T-cell (primary cell): ENCODE measurements at regions of chr13 and their contacts with region 1.

Region 1: DNA sequence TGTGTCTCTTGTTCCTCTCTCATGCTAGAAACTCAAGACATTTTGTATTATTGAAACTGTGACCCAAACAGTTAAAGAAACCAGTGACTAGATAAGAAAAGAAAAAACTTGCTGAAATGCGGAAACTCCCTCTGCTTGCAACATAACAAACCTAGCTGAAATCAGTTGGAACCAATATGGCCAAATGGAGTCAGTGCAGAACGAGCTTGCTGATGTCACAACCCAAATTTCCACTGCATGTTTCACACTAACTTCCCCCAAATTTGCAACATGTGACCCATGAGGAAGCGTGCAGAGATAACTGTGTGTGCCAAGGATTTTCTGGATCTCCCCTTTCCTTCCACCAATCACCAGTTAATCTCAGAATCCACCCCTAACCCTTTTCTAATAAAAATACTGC is 208.0 kb downstream of the DLEU7 start:
- DNase-seq: peak in 2 of 35 experiments; percentile 5 to 29
- ATAC-seq: no peak
- H3K4me3 ChIP-seq: no peak overlapping the region
- H3K4me3 Mint-ChIP-seq: no peak overlapping the region
- H3K27ac ChIP-seq: no peak overlapping the region
- H3K27ac Mint-ChIP-seq: no peak overlapping the region
- H3K4me1 ChIP-seq: no peaks in the 10 kb centered on the region
- H3K4me1 Mint-ChIP-seq: no peaks in the 10 kb centered on the region
- H3K27me3 ChIP-seq: no peaks in the 10 kb centered on the region
- H3K27me3 Mint-ChIP-seq: no peaks in the 10 kb centered on the region

Region 2: GRCh38 chr13:49908637-49909036 is 726.9 kb before region 1 on chr13:
- CTCF ChIA-PET with region 1: no interaction called
- POLR2A ChIA-PET with region 1: interaction called in 1 of 2 experiments, 14 read pairs
- DNase-seq: no peak
- ATAC-seq: no peak
- H3K4me3 ChIP-seq: no peak overlapping the region
- H3K4me3 Mint-ChIP-seq: no peak overlapping the region
- H3K27ac ChIP-seq: no peak overlapping the region
- H3K27ac Mint-ChIP-seq: no peak overlapping the region
- H3K4me1 ChIP-seq: no peaks in the 10 kb centered on the region
- H3K4me1 Mint-ChIP-seq: no peaks in the 10 kb centered on the region
- H3K27me3 ChIP-seq: peaks cover 0 to 2% of the 10 kb centered on the region in 2 experiments
- H3K27me3 Mint-ChIP-seq: no peaks in the 10 kb centered on the region